WTC11 (cell line): ENCODE measurements at regions of chr20 and their contacts with region 1.

Region 1: GRCh38 chr20:63290677-63291472 is 2.1 kb upstream of the COL20A1 start:
- DNase-seq: peak; percentile 86
- ATAC-seq: peak; percentile 80
- H3K4me3 Mint-ChIP-seq: no peak overlapping the region
- H3K27ac Mint-ChIP-seq: no peak overlapping the region
- H3K4me1 Mint-ChIP-seq: peaks cover 15% of the 10 kb centered on the region
- H3K27me3 Mint-ChIP-seq: peaks cover 5% of the 10 kb centered on the region
- CTCF ChIP-seq: peak; percentile 94

Region 2: DNA sequence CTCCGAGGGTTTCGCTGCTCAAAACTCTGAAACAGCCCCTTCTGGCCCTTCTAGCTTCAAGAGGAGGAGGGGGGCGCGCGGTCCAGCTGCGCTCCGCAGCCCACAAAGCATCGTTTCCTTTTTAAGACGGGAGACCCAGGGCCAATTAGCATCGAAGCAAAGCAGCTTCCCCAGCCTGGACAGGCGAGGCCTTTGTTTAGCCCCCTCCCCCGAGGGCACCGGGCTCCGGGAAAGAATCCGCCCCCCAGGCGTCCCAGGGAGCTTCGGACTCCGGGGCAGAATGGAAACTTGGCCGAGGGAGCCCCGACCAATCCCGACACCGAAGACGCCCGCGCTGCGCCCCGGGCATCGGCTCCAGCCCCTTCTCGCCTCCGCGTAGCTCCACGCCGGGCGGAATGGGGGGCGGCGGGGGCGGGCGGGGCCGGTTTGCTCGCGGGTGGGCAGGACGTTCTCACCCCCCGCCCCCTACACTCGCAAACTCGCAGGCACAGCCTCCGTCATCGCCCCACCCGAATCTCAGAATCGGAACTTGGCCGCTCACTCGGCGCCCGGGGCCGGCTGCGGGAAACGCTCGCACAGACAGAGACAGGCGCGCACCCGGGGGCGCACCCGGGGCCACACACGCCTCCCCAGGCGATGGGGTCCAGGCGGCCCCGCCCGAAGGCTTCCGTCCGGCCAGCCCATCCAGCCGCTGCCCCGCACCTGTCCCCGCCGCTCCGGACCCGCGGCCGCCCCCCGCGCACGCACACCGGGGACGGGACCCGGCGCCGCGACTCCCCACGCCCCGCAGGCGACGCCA is 37.2 kb before region 1 on chr20:
- CTCF ChIA-PET with region 1: interaction called, 13 read pairs
- POLR2A ChIA-PET with region 1: interaction called, 3 read pairs
- DNase-seq: peak; percentile 79
- ATAC-seq: peak; percentile 47
- H3K4me3 Mint-ChIP-seq: peak overlapping the region; percentile 62
- H3K27ac Mint-ChIP-seq: no peak overlapping the region
- H3K4me1 Mint-ChIP-seq: peaks cover 23% of the 10 kb centered on the region
- H3K27me3 Mint-ChIP-seq: peaks cover 51% of the 10 kb centered on the region
- CTCF ChIP-seq: no peak

Region 3: GRCh38 chr20:63272584-63273579 is 18.0 kb before region 1 on chr20 and contains the start of gene ARFGAP1:
- CTCF ChIA-PET with region 1: interaction called, 14 read pairs
- POLR2A ChIA-PET with region 1: interaction called, 3 read pairs
- DNase-seq: peak; percentile 92
- ATAC-seq: peak; percentile 93
- H3K4me3 Mint-ChIP-seq: peak within 1 kb of the TSS; percentile 92
- H3K27ac Mint-ChIP-seq: peak within 1 kb of the TSS; percentile 94
- H3K4me1 Mint-ChIP-seq: peaks cover 16% of the 10 kb centered on the region
- H3K27me3 Mint-ChIP-seq: no peaks in the 10 kb centered on the region
- CTCF ChIP-seq: no peak
- total RNA-seq, gene ARFGAP1: 115 to 207 TPM (median 121 TPM) in 3 replicates